A549 (cell line): ENCODE measurements at regions of chr7 and their contacts with region 1.

Region 1: GRCh38 chr7:35537067-35538023 is 157.6 kb downstream of the HERPUD2 start:
- DNase-seq: peak; percentile 70 to 85
- ATAC-seq: peak; percentile 93 to 99
- H3K4me3 ChIP-seq: peak overlapping the region; percentile 50
- H3K27ac ChIP-seq: peak overlapping the region; percentile 67 to 84
- H3K4me1 ChIP-seq: no peaks in the 10 kb centered on the region
- CTCF ChIP-seq: peak; percentile 88
- EP300 ChIP-seq: no peak
- POLR2A ChIP-seq: no peak
- RAD21 ChIP-seq: peak; percentile 91 to 94

Region 2: DNA sequence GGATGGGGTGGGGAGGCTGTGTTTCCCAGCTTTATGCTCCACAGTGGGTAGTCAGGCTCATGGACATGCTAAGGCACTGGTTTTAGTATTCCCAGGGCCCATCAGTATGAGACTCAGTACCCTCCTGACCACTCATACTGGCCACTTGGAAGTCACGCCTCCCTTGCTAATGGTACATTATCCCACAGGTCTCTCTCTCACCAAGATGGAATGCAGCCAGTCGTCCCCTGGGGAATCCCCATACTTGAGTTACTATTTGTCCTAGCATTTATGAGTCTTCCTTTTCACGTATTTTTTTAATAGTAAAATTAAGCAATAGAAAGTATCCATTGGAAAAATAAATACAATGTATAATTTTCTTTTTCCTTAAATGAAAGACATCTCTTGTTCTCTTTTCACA is 202.8 kb before region 1 on chr7:
- CTCF ChIA-PET with region 1: no interaction called
- POLR2A ChIA-PET with region 1: no interaction called
- DNase-seq: no peak
- ATAC-seq: no peak
- H3K4me3 ChIP-seq: no peak overlapping the region
- H3K27ac ChIP-seq: no peak overlapping the region
- H3K4me1 ChIP-seq: no peaks in the 10 kb centered on the region
- CTCF ChIP-seq: no peak
- EP300 ChIP-seq: no peak
- POLR2A ChIP-seq: no peak
- RAD21 ChIP-seq: no peak

Region 3: GRCh38 chr7:35548291-35548690 is 10.9 kb after region 1 on chr7:
- CTCF ChIA-PET with region 1: interaction called, 10 read pairs
- POLR2A ChIA-PET with region 1: no interaction called
- DNase-seq: no peak
- ATAC-seq: no peak
- H3K4me3 ChIP-seq: no peak overlapping the region
- H3K27ac ChIP-seq: no peak overlapping the region
- H3K4me1 ChIP-seq: no peaks in the 10 kb centered on the region
- CTCF ChIP-seq: no peak
- EP300 ChIP-seq: no peak
- POLR2A ChIP-seq: no peak
- RAD21 ChIP-seq: no peak